ENCODE measurements at regions of chr1 and their contacts with region 1.

Region 1: GRCh38 chr1:211382714-211383480 is 56.3 kb downstream of the TRAF5 start:
- DNase-seq: peak; percentile 99
- H3K4me3 Mint-ChIP-seq: peak overlapping the region; percentile 82
- H3K27ac Mint-ChIP-seq: peak overlapping the region; percentile 98
- H3K4me1 Mint-ChIP-seq: peaks cover 26% of the 10 kb centered on the region
- H3K27me3 Mint-ChIP-seq: no peaks in the 10 kb centered on the region
- CTCF ChIP-seq: no peak

Region 2: DNA sequence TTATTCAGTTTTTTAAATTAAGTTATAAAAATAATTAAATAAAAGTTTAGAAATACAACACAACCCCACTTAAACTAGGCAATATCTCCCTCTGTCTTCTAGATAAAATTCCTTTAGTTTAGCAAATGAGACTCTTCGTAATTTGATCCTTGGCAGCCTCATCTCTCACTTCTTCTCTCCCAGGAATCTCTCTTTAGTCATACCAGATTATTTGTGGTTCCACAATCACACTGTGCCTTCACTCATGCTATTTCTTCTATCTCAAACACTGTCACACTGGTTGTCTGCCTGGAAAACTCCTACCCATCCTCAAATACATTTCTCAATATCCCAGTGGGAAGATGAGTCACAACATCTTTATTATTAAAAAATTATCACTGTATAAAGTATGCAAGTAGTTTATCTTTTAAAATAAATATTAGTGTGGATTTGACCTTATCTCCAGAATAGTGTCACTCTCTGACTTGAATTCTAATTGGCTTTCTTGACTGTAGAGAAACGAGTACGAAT is 444.4 kb before region 1 on chr1:
- CTCF ChIA-PET with region 1: no interaction called
- POLR2A ChIA-PET with region 1: no interaction called
- intact Hi-C with region 1: no loop called
- DNase-seq: no peak
- H3K4me3 Mint-ChIP-seq: no peak overlapping the region
- H3K27ac Mint-ChIP-seq: no peak overlapping the region
- H3K4me1 Mint-ChIP-seq: no peaks in the 10 kb centered on the region
- H3K27me3 Mint-ChIP-seq: no peaks in the 10 kb centered on the region
- CTCF ChIP-seq: no peak

Region 3: GRCh38 chr1:211198111-211198510 is 184.8 kb before region 1 on chr1:
- CTCF ChIA-PET with region 1: no interaction called
- POLR2A ChIA-PET with region 1: no interaction called
- intact Hi-C with region 1: no loop called
- DNase-seq: peak; percentile 30
- H3K4me3 Mint-ChIP-seq: no peak overlapping the region
- H3K27ac Mint-ChIP-seq: peak overlapping the region; percentile 1
- H3K4me1 Mint-ChIP-seq: peaks cover 24% of the 10 kb centered on the region
- H3K27me3 Mint-ChIP-seq: no peaks in the 10 kb centered on the region
- CTCF ChIP-seq: no peak

Region 4: DNA sequence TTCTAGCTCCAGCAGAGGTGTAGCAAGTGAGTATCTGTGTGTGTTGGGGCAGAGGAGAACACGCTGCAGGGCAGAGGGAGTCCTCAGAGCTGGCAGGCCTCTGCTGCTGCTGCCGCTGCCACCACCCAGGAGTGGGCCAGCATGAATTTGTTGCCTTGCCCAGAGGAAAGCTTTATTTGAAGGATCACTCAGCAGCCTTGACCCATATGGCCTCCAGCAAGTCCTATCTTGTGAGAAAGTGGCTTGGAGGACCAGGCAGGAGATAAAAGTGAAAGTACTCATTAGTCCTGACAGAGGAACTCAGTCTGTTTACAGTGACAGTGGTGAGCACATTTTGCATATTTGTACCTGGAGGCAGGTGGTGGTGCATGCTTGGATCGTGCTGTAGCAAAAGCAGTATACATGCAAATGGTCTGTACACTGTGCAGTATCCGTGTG is 53.1 kb before region 1 on chr1:
- CTCF ChIA-PET with region 1: interaction called, 17 read pairs
- POLR2A ChIA-PET with region 1: interaction called, 18 read pairs
- intact Hi-C with region 1: no loop called
- DNase-seq: no peak
- H3K4me3 Mint-ChIP-seq: no peak overlapping the region
- H3K27ac Mint-ChIP-seq: no peak overlapping the region
- H3K4me1 Mint-ChIP-seq: peaks cover 47% of the 10 kb centered on the region
- H3K27me3 Mint-ChIP-seq: no peaks in the 10 kb centered on the region
- CTCF ChIP-seq: no peak

Region 5: DNA sequence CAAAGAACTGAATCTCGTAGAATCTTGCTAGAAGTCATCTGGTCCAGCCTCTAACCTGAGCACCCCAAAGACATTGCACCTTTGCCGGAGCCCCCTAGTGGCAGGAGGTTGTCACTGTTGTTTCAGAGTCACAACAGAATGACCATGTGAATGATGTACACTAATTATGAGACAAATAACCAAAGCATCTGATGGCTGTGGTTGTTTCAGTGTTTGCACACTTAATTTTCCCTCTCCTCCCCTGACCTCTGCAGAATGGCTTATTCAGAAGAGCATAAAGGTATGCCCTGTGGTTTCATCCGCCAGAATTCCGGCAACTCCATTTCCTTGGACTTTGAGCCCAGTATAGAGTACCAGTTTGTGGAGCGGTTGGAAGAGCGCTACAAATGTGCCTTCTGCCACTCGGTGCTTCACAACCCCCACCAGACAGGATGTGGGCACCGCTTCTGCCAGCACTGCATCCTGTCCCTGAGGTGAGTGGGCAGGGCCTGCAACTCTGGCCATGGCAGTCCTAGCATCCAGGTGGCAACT is 29.8 kb before region 1 on chr1:
- CTCF ChIA-PET with region 1: no interaction called
- POLR2A ChIA-PET with region 1: interaction called, 15 read pairs
- intact Hi-C with region 1: no loop called
- DNase-seq: peak; percentile 78
- H3K4me3 Mint-ChIP-seq: no peak overlapping the region
- H3K27ac Mint-ChIP-seq: no peak overlapping the region
- H3K4me1 Mint-ChIP-seq: peaks cover 15% of the 10 kb centered on the region
- H3K27me3 Mint-ChIP-seq: no peaks in the 10 kb centered on the region
- CTCF ChIP-seq: peak; percentile 93

Region 6: GRCh38 chr1:211359876-211360275 is 23.0 kb before region 1 on chr1:
- CTCF ChIA-PET with region 1: interaction called, 5 read pairs
- POLR2A ChIA-PET with region 1: interaction called, 15 read pairs
- intact Hi-C with region 1: no loop called
- DNase-seq: no peak
- H3K4me3 Mint-ChIP-seq: peak overlapping the region; percentile 28
- H3K27ac Mint-ChIP-seq: peak overlapping the region; percentile 70
- H3K4me1 Mint-ChIP-seq: peaks cover 34% of the 10 kb centered on the region
- H3K27me3 Mint-ChIP-seq: no peaks in the 10 kb centered on the region
- CTCF ChIP-seq: no peak

Region 7: DNA sequence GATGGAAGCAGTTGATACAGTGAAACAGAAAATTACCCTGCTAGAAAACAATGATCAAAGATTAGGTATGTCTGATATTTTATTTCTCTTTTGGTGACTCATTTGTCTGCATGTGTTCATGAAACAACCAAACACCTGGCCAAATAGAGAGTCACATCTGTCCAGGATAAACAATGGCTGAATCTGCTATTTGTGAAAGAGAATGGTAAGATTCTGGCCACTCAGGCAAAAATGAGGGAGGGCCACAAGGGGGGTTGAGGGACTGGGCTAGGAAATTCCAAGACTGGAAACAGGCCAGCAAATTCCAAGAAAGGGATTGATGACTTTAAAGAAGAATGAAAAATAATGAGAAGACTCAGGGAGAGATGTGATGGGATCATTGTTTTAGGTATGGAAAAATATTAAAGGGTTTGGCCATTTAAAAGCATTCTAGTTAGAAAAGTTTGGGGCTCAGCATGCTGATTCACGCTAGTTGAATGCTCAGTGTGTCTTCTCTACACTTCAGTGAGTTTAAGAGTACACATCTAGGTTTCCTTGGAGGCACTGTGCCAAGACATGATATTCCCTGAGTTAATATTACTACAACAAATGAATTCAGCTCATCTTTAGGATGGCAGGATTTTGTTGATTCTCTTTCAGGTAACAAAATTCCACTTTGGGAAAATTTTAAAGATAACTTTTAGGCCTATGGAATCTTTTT is 11.3 kb before region 1 on chr1:
- CTCF ChIA-PET with region 1: interaction called, 4 read pairs
- POLR2A ChIA-PET with region 1: interaction called, 15 read pairs
- intact Hi-C with region 1: no loop called
- DNase-seq: peak; percentile 53
- H3K4me3 Mint-ChIP-seq: peak overlapping the region; percentile 1
- H3K27ac Mint-ChIP-seq: peak overlapping the region; percentile 75
- H3K4me1 Mint-ChIP-seq: peaks cover 25% of the 10 kb centered on the region
- H3K27me3 Mint-ChIP-seq: no peaks in the 10 kb centered on the region
- CTCF ChIP-seq: no peak

Region 8: DNA sequence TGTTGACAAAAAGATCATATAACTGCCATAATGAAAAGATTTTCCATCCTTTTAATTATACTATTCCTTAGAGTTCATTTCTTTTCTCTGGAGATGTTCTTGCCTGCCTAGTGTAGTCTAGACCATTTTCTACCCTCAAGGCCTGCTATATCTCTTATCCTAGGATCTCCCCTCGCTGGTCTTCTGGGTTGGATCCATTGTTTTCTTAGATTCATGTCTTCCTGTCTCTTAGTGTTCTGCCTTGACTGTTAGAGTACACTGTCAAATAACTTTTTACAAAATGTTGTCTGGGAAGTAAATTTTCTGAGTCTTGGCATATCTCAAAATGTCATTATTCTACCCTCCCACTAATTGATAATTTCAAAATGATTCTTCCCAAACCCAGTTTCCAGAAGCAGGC is 10.3 kb after region 1 on chr1:
- CTCF ChIA-PET with region 1: no interaction called
- POLR2A ChIA-PET with region 1: interaction called, 16 read pairs
- intact Hi-C with region 1: no loop called
- DNase-seq: no peak
- H3K4me3 Mint-ChIP-seq: no peak overlapping the region
- H3K27ac Mint-ChIP-seq: no peak overlapping the region
- H3K4me1 Mint-ChIP-seq: no peaks in the 10 kb centered on the region
- H3K27me3 Mint-ChIP-seq: no peaks in the 10 kb centered on the region
- CTCF ChIP-seq: no peak

Region 9: DNA sequence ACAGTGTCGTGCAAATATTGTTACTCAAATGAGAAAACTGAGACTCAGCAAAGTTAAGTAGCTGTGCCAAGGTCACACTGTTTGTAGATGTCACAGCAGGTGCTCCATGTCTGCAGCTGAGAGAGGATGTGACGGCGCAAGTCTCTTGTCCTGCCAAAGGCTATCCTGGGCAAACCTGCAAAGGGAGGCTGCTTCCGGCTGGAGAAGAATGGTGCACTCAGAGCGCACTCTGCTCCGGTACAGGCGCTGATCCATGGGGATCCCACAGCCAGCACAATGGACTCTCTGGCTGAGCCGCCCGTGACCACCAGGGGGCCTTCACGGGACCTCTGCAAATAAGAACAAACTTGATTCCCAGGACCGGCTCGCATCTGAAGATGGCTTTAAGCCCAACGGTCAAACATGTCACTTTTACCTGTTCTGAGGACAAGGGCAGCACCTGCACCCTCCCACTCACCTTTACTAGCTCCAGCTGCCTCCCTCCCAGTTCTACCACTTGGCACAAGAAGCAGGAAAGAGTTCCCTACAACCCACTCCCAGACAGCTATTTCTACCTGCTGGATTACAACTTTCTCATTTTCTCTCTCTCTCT is 87.1 kb after region 1 on chr1:
- CTCF ChIA-PET with region 1: interaction called, 4 read pairs
- POLR2A ChIA-PET with region 1: no interaction called
- intact Hi-C with region 1: loop called (anchors 2 kb)
- DNase-seq: peak; percentile 92
- H3K4me3 Mint-ChIP-seq: no peak overlapping the region
- H3K27ac Mint-ChIP-seq: no peak overlapping the region
- H3K4me1 Mint-ChIP-seq: peaks cover 15% of the 10 kb centered on the region
- H3K27me3 Mint-ChIP-seq: no peaks in the 10 kb centered on the region
- CTCF ChIP-seq: peak; percentile 98

Measured in MCF 10A (cell line).